ENCODE measurements at regions of chr11 and their contacts with region 1.

Region 1: GRCh38 chr11:66371627-66372415 is at the start of gene SLC29A2:
- DNase-seq: peak; percentile 96
- ATAC-seq: peak; percentile 79
- H3K4me3 ChIP-seq: peak within 1 kb of the TSS; percentile 89
- H3K27ac ChIP-seq: peak within 1 kb of the TSS; percentile 63
- H3K4me1 ChIP-seq: peaks cover 25% of the 10 kb centered on the region
- H3K27me3 ChIP-seq: no peaks in the 10 kb centered on the region
- CTCF ChIP-seq: no peak
- total RNA-seq, gene SLC29A2: 25.5 and 27.8 TPM in 2 replicates

Region 2: GRCh38 chr11:66347425-66348276 is 24.2 kb before region 1 on chr11 and contains the start of gene B4GAT1:
- CTCF ChIA-PET with region 1: no interaction called
- POLR2A ChIA-PET with region 1: interaction called, 4 read pairs
- intact Hi-C with region 1: loop called (anchors 2 kb)
- DNase-seq: peak; percentile 98
- ATAC-seq: peak; percentile 64
- H3K4me3 ChIP-seq: peak within 1 kb of the TSS; percentile 94
- H3K27ac ChIP-seq: no peak within 1 kb of the TSS; the same call in 1 of the 2 replicates
- H3K4me1 ChIP-seq: peaks cover 35% of the 10 kb centered on the region
- H3K27me3 ChIP-seq: no peaks in the 10 kb centered on the region
- CTCF ChIP-seq: no peak
- total RNA-seq, gene B4GAT1: 38.9 and 41.1 TPM in 2 replicates

Region 3: GRCh38 chr11:66408488-66409214 is 36.8 kb after region 1 on chr11:
- CTCF ChIA-PET with region 1: no interaction called
- POLR2A ChIA-PET with region 1: no interaction called
- intact Hi-C with region 1: no loop called
- DNase-seq: peak; percentile 90
- ATAC-seq: peak; percentile 84
- H3K4me3 ChIP-seq: peak overlapping the region; percentile 49; the same call in 1 of the 2 replicates
- H3K27ac ChIP-seq: no peak overlapping the region
- H3K4me1 ChIP-seq: no peaks in the 10 kb centered on the region; the same call in 1 of the 2 replicates
- H3K27me3 ChIP-seq: peaks cover 83% of the 10 kb centered on the region
- CTCF ChIP-seq: peak; percentile 100

Measured in PC-3 (cell line).